A673 (cell line): ENCODE measurements at regions of chr4 and their contacts with region 1.

Region 1: DNA sequence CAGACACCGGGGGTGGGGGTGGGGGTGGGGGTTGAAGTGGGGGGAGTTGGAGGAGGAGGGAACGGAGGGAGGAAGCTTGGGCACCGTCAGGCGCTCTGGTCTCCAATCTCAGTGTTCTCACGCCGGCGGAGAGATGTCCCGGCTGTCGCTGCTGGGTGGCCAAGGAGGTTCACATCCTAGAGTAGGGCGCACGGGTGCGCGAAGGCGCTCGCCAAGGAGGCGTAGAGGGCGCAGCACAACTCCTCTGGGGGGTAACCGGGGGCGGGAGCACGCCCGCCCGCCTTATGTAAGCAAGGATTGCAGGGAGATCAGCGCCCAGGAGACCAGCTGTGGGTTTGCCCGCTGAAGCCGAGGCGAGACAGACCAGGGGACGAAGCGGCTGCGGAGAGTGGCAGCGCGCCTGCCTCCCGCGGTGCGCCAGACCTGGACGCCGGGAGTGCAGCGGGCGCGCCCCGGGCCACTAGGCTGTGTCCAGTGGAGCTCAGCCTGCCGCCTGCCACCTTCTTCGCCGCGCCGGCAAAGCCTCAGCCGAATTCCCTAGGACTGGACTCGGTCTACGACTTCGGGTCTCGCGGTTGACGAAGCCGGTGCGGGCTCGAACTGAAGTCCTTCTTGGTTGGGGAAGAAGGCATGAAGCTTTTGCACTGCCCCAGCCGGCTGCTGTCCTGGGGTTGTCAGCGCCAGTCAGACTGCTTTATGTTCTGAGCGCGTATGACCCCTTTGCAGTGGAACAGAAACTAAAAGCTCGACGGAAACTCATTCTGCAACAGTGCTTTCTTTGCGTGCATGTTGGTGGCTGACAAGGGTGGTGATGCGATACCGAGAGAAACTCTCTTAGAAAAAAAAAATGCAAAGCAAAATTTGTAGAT is 707 bp upstream of the UNC5C start:
- DNase-seq: no peak
- H3K4me3 ChIP-seq: peak overlapping the region; percentile 50
- H3K27ac ChIP-seq: no peak overlapping the region
- H3K4me1 ChIP-seq: peaks cover 34% of the 10 kb centered on the region
- H3K27me3 ChIP-seq: peaks cover 25% of the 10 kb centered on the region
- CTCF ChIP-seq: no peak

Region 2: GRCh38 chr4:95293014-95293413 is 256.5 kb before region 1 on chr4:
- CTCF ChIA-PET with region 1: no interaction called
- POLR2A ChIA-PET with region 1: no interaction called
- intact Hi-C with region 1: loop called (anchors 5 kb)
- DNase-seq: peak; percentile 34
- H3K4me3 ChIP-seq: no peak overlapping the region
- H3K27ac ChIP-seq: no peak overlapping the region
- H3K4me1 ChIP-seq: peaks cover 28% of the 10 kb centered on the region
- H3K27me3 ChIP-seq: no peaks in the 10 kb centered on the region
- CTCF ChIP-seq: no peak

Region 3: GRCh38 chr4:95371476-95372224 is 177.8 kb before region 1 on chr4:
- CTCF ChIA-PET with region 1: no interaction called
- POLR2A ChIA-PET with region 1: no interaction called
- intact Hi-C with region 1: loop called (anchors 5 kb)
- DNase-seq: peak; percentile 21
- H3K4me3 ChIP-seq: no peak overlapping the region
- H3K27ac ChIP-seq: no peak overlapping the region
- H3K4me1 ChIP-seq: no peaks in the 10 kb centered on the region
- H3K27me3 ChIP-seq: no peaks in the 10 kb centered on the region
- CTCF ChIP-seq: no peak

Region 4: DNA sequence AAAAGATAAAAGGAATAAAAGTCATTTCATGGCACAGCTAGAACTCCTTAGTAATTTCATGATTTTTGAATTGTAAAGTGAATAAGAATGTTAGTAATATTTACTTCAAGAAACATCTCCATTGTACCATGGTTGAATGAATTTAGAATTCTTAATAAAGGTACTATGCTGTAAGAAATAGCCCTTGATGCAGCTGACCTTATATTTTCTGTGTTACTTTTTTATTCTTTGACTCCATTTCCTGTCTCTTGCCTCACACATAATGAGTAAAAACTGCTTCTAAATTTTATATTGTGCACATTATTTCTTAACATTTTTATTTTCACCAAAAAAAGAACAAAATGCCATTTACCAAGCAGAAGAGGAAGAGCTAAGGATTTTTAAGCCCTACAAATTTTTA is 208.5 kb after region 1 on chr4:
- CTCF ChIA-PET with region 1: no interaction called
- POLR2A ChIA-PET with region 1: no interaction called
- intact Hi-C with region 1: loop called (anchors 10 kb)
- DNase-seq: peak; percentile 59
- H3K4me3 ChIP-seq: no peak overlapping the region
- H3K27ac ChIP-seq: peak overlapping the region; percentile 44
- H3K4me1 ChIP-seq: peaks cover 24% of the 10 kb centered on the region
- H3K27me3 ChIP-seq: no peaks in the 10 kb centered on the region
- CTCF ChIP-seq: no peak

Region 5: DNA sequence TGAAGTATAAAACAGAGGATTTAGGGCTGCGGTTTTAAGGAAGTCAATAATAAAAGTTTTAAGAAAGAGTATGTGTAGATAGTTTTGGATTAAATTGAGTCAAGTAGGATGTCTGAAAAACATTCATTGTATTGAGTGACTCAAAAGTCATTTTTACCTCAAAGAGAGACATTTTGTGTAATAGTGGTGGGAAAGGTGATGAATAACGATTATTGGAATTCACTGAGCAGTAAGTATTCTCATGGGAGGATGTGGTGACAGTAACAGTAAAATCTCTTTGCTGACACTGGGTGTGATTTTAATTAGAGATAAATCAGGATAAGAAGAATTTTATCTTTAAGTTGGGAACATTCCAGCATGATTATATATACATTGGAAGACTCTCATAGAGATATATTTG is 524.0 kb after region 1 on chr4:
- CTCF ChIA-PET with region 1: no interaction called
- POLR2A ChIA-PET with region 1: no interaction called
- intact Hi-C with region 1: no loop called
- DNase-seq: no peak
- H3K4me3 ChIP-seq: no peak overlapping the region
- H3K27ac ChIP-seq: no peak overlapping the region
- H3K4me1 ChIP-seq: no peaks in the 10 kb centered on the region
- H3K27me3 ChIP-seq: no peaks in the 10 kb centered on the region
- CTCF ChIP-seq: no peak